PC-9 (cell line): ENCODE measurements at regions of chr5 and their contacts with region 1.

Region 1: GRCh38 chr5:51225791-51226735 is 157.2 kb upstream of the ISL1 start:
- DNase-seq: peak; percentile 67 to 77
- H3K4me3 ChIP-seq: no peak overlapping the region
- H3K27ac ChIP-seq: 0 out of 2 replicates have a peak overlapping the region, but pooled peaks have one; percentile 3
- H3K4me1 ChIP-seq: no peaks in the 10 kb centered on the region
- H3K27me3 ChIP-seq: no peaks in the 10 kb centered on the region
- CTCF ChIP-seq: no peak

Region 2: DNA sequence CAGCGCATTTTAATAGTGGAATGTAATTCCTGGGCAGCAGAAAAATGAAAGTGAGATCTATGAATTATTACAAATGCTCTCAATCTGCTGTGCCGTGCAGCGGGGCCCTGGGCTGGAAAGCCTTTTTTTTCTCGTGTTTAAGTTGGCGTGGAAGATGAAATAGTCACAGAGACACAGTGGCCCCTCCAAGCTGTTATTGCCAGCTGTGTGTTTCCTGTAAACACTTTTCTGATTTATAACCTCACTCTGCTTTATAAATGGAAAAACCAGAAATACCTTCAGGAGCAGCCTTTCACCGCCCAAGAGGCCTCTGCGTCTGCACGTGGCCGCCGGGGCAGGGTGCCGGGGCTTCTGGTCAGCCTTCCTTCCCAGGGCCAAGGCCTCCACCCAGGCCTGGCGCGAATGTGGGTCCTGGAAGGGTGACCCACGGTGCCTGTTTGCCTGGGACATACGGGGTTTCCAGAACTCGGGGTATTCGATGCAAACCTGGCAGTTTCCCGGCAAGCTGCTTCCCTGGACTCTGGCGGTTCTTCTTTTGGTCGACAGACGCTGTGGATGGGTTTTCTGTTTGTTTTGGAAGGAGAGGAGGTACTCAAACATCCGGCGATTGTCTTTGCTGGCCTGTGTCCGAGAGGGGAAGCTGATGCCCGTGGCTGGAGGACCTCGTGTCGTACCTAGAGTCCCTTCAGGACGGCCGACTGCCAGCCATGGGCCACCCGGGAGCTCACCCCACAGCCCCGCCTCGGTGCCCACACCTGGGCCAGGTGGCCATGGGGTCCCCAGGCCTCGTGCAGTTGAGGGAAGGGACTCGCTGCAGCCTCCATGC is 302.9 kb before region 1 on chr5:
- CTCF ChIA-PET with region 1: no interaction called
- POLR2A ChIA-PET with region 1: no interaction called
- intact Hi-C with region 1: no loop called
- DNase-seq: no peak
- H3K4me3 ChIP-seq: no peak overlapping the region
- H3K27ac ChIP-seq: no peak overlapping the region
- H3K4me1 ChIP-seq: no peaks in the 10 kb centered on the region
- H3K27me3 ChIP-seq: no peaks in the 10 kb centered on the region
- CTCF ChIP-seq: no peak; the same call in 1 of the 2 replicates

Region 3: DNA sequence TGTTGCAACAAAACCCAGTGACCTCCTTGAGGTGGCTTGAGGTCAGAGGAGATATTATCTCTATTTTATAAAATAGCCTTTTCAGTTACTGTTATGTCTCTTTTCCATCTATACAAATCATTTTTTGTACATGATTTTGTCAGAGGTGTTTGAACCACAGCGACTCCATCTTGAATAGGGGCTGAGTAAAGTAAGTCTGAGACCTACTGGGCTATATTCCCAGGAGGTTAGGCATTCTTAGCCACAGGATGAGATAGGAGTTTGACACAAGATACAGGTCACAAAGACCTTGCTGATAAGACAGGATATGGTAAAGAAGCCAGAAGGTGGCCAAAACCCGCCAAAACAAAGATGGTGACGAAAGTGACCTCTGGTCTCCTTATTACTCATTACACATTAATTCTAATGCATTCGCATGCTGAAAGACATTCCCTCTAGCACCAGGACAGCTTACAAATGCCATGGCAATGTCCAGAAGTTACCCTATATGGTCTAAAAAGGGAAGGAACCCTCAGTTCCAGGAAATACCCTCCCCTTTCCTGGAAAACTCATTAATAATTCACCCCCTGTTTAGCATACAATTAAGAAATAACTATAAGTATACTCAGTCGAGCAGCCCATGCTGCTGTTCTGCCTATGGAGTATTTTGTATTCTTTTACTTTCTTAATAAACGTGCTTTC is 126.8 kb before region 1 on chr5:
- CTCF ChIA-PET with region 1: no interaction called
- POLR2A ChIA-PET with region 1: no interaction called
- intact Hi-C with region 1: loop called (anchors 1 kb)
- DNase-seq: peak in 1 of 2 experiments; percentile 4
- H3K4me3 ChIP-seq: no peak overlapping the region
- H3K27ac ChIP-seq: no peak overlapping the region
- H3K4me1 ChIP-seq: no peaks in the 10 kb centered on the region
- H3K27me3 ChIP-seq: no peaks in the 10 kb centered on the region
- CTCF ChIP-seq: no peak

Region 4: DNA sequence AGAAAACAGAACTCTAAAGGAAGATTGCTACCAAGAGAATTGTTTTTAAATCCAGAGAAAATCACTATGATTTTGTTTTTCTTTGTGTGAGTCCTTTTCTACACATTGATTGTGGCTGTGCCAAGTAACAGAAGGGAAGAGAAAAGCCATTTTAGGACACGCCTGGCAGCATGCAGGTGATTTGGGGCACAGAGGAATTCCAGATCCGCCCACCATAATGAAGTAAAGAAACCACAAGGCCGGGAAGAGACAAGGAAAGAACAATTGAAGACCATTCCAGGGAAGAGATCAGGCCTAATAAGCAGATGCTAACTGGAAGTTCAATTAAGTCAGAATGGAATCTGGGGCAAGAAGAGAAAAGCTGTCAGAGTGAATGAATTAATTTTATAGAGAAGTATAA is 46.9 kb after region 1 on chr5:
- CTCF ChIA-PET with region 1: no interaction called
- POLR2A ChIA-PET with region 1: no interaction called
- intact Hi-C with region 1: loop called (anchors 5 kb)
- DNase-seq: peak in 1 of 2 experiments; percentile 14
- H3K4me3 ChIP-seq: no peak overlapping the region
- H3K27ac ChIP-seq: no peak overlapping the region
- H3K4me1 ChIP-seq: no peaks in the 10 kb centered on the region
- H3K27me3 ChIP-seq: no peaks in the 10 kb centered on the region
- CTCF ChIP-seq: no peak

Region 5: DNA sequence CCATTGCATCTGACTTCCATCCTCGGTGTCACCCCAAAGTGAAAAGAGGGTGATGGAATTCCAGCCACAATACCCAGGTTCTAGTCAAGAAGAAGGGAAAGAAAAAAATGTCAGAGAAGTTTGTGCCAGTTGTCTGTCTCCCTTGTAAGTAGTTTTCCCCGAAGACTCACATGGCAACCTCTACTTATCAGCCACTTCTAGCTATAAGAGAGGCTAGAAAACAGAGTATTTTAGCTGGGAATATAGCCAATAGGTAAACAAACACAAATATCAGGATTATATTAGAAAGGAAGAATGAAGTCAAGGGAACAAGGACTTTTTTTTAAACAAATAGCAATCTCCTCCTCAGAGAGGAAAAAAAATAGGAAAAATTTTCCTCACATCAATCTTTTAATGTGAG is 145.0 kb after region 1 on chr5:
- CTCF ChIA-PET with region 1: no interaction called
- POLR2A ChIA-PET with region 1: no interaction called
- intact Hi-C with region 1: no loop called
- DNase-seq: no peak
- H3K4me3 ChIP-seq: no peak overlapping the region
- H3K27ac ChIP-seq: no peak overlapping the region
- H3K4me1 ChIP-seq: no peaks in the 10 kb centered on the region
- H3K27me3 ChIP-seq: no peaks in the 10 kb centered on the region
- CTCF ChIP-seq: no peak